SK-N-SH (cell line): ENCODE measurements at regions of chr6 and their contacts with region 1.

Region 1: DNA sequence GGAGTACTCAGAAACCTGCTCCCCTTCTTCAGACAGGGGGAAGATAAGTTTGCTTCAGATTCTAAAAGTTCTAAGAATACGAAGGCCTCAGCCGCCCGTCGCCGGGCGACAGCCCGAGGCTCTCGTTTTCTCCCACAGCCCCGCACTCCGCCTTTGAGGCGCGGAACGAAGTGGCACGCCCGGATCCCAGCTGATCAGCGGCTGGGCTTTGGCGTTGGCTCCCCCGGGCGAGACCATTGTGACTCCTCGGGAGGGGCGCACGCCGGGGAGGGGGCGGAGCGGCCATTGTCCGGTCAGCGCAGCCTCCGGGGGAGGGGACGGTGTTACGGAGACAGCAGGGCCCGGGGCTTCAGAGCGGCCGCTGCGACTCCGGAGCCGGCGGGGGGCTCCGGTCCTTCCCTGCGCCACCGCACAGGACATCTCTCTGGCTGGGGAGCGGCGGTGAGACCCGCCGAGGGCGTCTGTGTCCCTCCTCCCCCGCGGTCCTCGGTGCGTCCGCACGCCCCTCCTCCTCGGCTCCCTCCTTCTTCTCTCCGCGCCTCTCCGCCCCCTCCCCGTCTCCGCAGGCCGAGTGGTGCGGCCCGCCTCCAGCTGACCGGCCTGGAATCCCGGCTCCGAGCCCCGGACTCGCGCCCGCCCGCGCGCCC is at the start of gene ZFAND3:
- DNase-seq: peak; percentile 96
- H3K4me3 ChIP-seq: peak within 1 kb of the TSS; percentile 87 to 89
- H3K27ac ChIP-seq: peak within 1 kb of the TSS; percentile 96 to 98
- H3K4me1 ChIP-seq: peaks cover 24 to 27% of the 10 kb centered on the region in 2 experiments
- H3K27me3 ChIP-seq: no peaks in the 10 kb centered on the region
- CTCF ChIP-seq: no peak
- EP300 ChIP-seq: peak in 1 of 2 experiments; percentile 27; a peak in 1 of 4 replicates
- RAD21 ChIP-seq: no peak
- polyA plus RNA-seq, gene ZFAND3: 12.9 and 16.7 TPM in 2 replicates

Region 2: GRCh38 chr6:37636116-37636515 is 183.2 kb before region 1 on chr6:
- CTCF ChIA-PET with region 1: no interaction called
- POLR2A ChIA-PET with region 1: no interaction called
- DNase-seq: no peak
- H3K4me3 ChIP-seq: no peak overlapping the region
- H3K27ac ChIP-seq: peak overlapping the region in 1 of 2 experiments; percentile 52; a peak in 1 of 4 replicates
- H3K4me1 ChIP-seq: peaks cover 1 to 21% of the 10 kb centered on the region in 2 experiments; a peak in 3 of 4 replicates
- H3K27me3 ChIP-seq: no peaks in the 10 kb centered on the region
- CTCF ChIP-seq: no peak
- EP300 ChIP-seq: no peak
- RAD21 ChIP-seq: no peak

Region 3: GRCh38 chr6:37791156-37791919 is 28.0 kb before region 1 on chr6:
- CTCF ChIA-PET with region 1: interaction called, 12 read pairs
- POLR2A ChIA-PET with region 1: interaction called, 3 read pairs
- DNase-seq: peak; percentile 88
- H3K4me3 ChIP-seq: no peak overlapping the region
- H3K27ac ChIP-seq: peak overlapping the region in 1 of 2 experiments; percentile 34; a peak in 2 of 4 replicates
- H3K4me1 ChIP-seq: peaks cover 0 to 11% of the 10 kb centered on the region in 2 experiments; a peak in 1 of 4 replicates
- H3K27me3 ChIP-seq: no peaks in the 10 kb centered on the region
- CTCF ChIP-seq: peak; percentile 94
- EP300 ChIP-seq: peak; percentile 36 to 47; a peak in 2 of 4 replicates
- RAD21 ChIP-seq: peak; percentile 92

Region 4: DNA sequence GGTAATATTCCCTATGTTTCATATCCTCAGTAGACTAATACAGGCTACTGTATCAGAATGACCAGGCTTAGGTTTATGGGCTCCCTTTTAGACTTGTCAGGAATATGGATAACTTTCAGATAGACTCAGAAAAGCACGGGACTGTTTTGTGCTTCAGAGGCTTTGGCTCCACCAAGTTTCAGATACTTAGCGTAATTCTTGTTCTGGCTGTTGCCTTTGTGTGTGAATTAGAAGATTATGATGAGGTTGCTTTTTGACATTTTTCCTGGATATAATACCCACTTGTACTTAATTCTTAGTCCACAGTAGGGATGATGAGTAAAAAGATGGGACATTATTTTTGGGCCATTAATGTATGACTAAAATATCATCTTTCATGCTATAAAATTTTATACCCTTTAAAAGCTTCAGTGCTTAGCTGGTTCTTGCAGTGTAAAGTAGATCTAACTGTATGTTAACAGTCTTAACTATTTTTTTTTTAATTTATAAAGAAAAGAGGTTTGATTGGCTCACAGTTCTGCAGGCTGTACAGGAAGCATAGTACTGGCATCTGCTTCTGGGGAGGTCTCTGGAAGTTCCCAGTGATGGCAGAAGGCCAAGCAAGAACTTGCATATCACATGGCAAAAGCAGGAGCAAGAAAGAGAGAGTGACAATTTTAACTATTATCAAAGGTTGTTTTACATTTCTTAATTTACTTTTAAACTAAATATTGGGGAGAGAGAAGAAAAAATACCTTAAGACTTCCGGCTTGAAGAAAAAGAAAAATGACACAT is 121.0 kb after region 1 on chr6:
- CTCF ChIA-PET with region 1: no interaction called
- POLR2A ChIA-PET with region 1: no interaction called
- DNase-seq: no peak
- H3K4me3 ChIP-seq: no peak overlapping the region
- H3K27ac ChIP-seq: no peak overlapping the region
- H3K4me1 ChIP-seq: peaks cover 3 to 24% of the 10 kb centered on the region in 2 experiments; a peak in 2 of 4 replicates
- H3K27me3 ChIP-seq: no peaks in the 10 kb centered on the region
- CTCF ChIP-seq: no peak
- EP300 ChIP-seq: no peak
- RAD21 ChIP-seq: no peak